Ovary (tissue), 10 donors: ENCODE measurements at regions of chr12 and their contacts with region 1.

Region 1: GRCh38 chr12:25958428-25959070 is at the start of gene RASSF8:
- DNase-seq: peak; percentile 77 to 88 (median 85)
- H3K4me3 ChIP-seq: peak within 1 kb of the TSS; percentile 55
- H3K27ac ChIP-seq: peak within 1 kb of the TSS; percentile 94 to 97
- H3K4me1 ChIP-seq: peaks cover 4% of the 10 kb centered on the region
- H3K27me3 ChIP-seq: no peaks in the 10 kb centered on the region
- CTCF ChIP-seq: peak in 2 of 3 donors; percentile 7 to 8
- EP300 ChIP-seq: no peak
- POLR2A ChIP-seq: peak; percentile 35
- total RNA-seq, gene RASSF8: 60.3 to 134 (median 99.5) TPM

Region 2: GRCh38 chr12:25993901-25994651 is 35.5 kb after region 1 on chr12:
- intact Hi-C with region 1: no loop called
- DNase-seq: no peak
- H3K4me3 ChIP-seq: no peak overlapping the region
- H3K27ac ChIP-seq: no peak overlapping the region
- H3K4me1 ChIP-seq: peaks cover 1% of the 10 kb centered on the region
- H3K27me3 ChIP-seq: no peaks in the 10 kb centered on the region
- CTCF ChIP-seq: no peak
- EP300 ChIP-seq: no peak
- POLR2A ChIP-seq: no peak

Region 3: GRCh38 chr12:26017484-26018206 is 59.1 kb after region 1 on chr12:
- intact Hi-C with region 1: loop called in 3 of 4 experiments (anchors 10 kb)
- DNase-seq: no peak
- H3K4me3 ChIP-seq: no peak overlapping the region
- H3K27ac ChIP-seq: no peak overlapping the region
- H3K4me1 ChIP-seq: peaks cover 8% of the 10 kb centered on the region
- H3K27me3 ChIP-seq: no peaks in the 10 kb centered on the region
- CTCF ChIP-seq: peak in 1 of 3 donors; percentile 42
- EP300 ChIP-seq: no peak
- POLR2A ChIP-seq: no peak

Region 4: DNA sequence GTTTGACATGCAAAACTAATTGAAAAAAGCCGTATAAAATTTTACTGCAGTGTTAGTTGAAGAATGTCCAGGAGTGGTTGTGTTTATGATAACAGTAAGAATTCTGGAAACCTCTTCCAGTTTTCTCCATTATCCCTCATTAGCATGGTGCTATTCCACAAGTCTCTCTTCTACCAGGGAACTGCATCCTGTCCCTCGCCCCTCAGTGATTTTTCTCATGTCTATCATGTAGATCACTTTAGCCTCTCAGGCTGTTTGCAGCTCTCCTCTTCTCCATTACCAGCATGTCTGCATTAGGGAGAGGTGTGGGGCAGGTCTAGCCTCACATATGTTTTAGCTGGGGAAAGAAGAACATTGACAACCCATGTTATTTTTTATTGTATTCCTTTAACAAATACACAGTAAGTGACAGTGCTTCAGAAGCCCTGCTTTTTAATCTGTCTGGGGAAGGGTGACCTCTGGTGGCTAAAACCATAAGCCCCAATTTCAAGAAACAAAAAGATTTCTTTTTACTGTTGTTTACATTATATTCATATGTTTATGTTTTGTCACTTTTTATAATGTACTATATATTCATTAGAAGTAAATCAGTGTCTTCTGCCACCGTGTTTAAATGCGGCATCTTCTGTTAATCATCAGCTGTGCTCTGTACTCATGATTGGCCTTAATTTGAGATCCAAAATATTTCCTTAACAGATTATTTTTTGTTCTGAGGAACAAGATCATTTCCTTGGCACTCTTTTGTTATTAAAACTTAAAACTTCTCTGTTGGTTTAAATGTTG is 70.6 kb after region 1 on chr12:
- intact Hi-C with region 1: loop called in 1 of 4 experiments (anchors 5 kb)
- DNase-seq: peak in 1 of 5 donors; percentile 52
- H3K4me3 ChIP-seq: no peak overlapping the region
- H3K27ac ChIP-seq: no peak overlapping the region
- H3K4me1 ChIP-seq: peaks cover 6% of the 10 kb centered on the region
- H3K27me3 ChIP-seq: no peaks in the 10 kb centered on the region
- CTCF ChIP-seq: peak; percentile 56 to 75 (median 67)
- EP300 ChIP-seq: no peak
- POLR2A ChIP-seq: no peak